Heart right ventricle (tissue), 16 donors: ENCODE measurements at regions of chr7 and their contacts with region 1.

Region 1: GRCh38 chr7:139494835-139495579 is 11.5 kb upstream of the KLRG2 start:
- DNase-seq: no peak
- ATAC-seq: peak in 1 of 8 donors; percentile 49
- H3K4me3 ChIP-seq: no peak overlapping the region
- H3K27ac ChIP-seq: no peak overlapping the region
- H3K4me1 ChIP-seq: peaks cover 0 to 13% (median 4%) of the 10 kb centered on the region in 9 donors
- H3K27me3 ChIP-seq: peaks cover 0 to 11% (median 8%) of the 10 kb centered on the region in 7 donors
- CTCF ChIP-seq: no peak

Region 2: GRCh38 chr7:139566736-139567647 is 72.0 kb after region 1 on chr7:
- intact Hi-C with region 1: loop called in 1 of 10 experiments (anchors 5 kb)
- DNase-seq: no peak
- ATAC-seq: no peak
- H3K4me3 ChIP-seq: no peak overlapping the region
- H3K27ac ChIP-seq: no peak overlapping the region
- H3K4me1 ChIP-seq: peaks cover 0 to 17% (median 0%) of the 10 kb centered on the region in 9 donors
- H3K27me3 ChIP-seq: no peaks in the 10 kb centered on the region
- CTCF ChIP-seq: no peak

Region 3: DNA sequence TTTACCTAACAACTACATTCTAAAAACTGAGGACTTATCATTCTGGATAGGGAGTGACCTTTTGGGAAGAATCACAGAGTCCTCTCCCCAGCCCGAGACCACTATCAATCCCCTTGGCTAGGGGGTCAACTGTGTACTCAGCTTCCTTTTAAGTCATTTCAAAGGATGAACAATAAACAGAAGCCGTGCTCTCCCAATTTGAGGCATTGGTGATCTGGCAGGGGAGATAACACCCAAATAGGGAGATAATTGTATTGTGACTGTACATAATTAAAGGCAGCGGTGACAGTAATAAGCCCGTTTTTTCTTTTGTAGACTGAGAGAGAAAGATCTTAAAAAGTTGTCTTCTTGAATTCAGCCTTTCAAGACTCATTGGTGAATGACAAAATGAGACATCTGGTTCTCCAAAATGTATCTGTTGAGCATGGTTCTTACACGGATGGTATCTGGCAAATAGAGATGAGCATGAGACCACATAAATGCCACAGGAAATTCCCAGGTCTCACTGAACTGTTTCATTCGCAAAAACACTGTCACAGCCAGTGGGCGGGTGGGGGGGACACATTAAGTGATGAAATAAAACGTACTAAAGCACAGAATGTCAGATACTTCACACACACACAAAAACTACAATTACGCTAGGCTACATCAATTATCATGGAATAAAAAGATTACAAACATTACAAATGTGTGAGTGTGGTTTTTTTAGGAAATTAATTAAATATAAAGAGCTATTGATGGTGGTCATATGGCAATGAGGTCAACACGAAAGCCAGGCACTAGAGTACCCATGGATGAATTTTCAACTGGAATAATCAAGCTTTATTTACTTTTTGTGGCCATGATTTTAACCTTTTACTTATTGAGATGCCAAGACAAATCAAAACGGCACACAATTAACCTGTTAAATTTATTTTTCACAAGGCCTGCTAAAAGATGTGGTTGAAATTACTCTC is 174.4 kb after region 1 on chr7:
- intact Hi-C with region 1: no loop called
- DNase-seq: no peak
- ATAC-seq: no peak
- H3K4me3 ChIP-seq: no peak overlapping the region
- H3K27ac ChIP-seq: no peak overlapping the region
- H3K4me1 ChIP-seq: peaks cover 0 to 38% (median 16%) of the 10 kb centered on the region in 9 donors
- H3K27me3 ChIP-seq: no peaks in the 10 kb centered on the region
- CTCF ChIP-seq: no peak